Activated naive CD4-positive, alpha-beta T cell treated with anti-CD3 and anti-CD28 coated beads for 36 hours (primary cell): ENCODE measurements at regions of chr12 and their contacts with region 1.

Region 1: GRCh38 chr12:65232476-65233077 is 45.9 kb upstream of the MSRB3 start:
- DNase-seq: no peak
- H3K4me3 Mint-ChIP-seq: no peak overlapping the region
- H3K27ac Mint-ChIP-seq: no peak overlapping the region
- H3K4me1 Mint-ChIP-seq: peaks cover 11% of the 10 kb centered on the region
- H3K27me3 Mint-ChIP-seq: no peaks in the 10 kb centered on the region

Region 2: DNA sequence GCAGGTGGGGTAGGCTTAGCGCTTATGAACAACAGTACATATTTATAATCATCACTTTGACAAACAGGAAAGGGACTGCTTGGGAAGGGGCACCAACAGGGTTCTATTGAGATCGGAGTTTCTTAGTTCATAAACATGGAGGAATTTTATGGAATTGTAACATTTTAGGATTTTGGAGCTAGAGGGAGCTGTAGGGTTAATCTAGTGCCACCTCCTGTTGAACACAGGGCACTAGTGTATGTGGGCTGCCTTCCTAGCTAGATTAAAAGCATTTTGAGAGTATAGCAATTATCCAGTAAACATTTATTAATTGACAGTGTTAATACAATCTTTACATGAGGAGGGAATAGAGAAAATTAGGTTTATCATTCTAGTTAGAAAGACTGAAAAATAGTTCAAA is 431.2 kb before region 1 on chr12:
- CTCF ChIA-PET with region 1: interaction called, 10 read pairs
- intact Hi-C with region 1: loop called (anchors 2 kb)
- DNase-seq: no peak
- H3K4me3 Mint-ChIP-seq: no peak overlapping the region
- H3K27ac Mint-ChIP-seq: no peak overlapping the region
- H3K4me1 Mint-ChIP-seq: peaks cover 3% of the 10 kb centered on the region
- H3K27me3 Mint-ChIP-seq: peaks cover 23% of the 10 kb centered on the region

Region 3: GRCh38 chr12:65055859-65056258 is 176.7 kb before region 1 on chr12:
- CTCF ChIA-PET with region 1: no interaction called
- intact Hi-C with region 1: no loop called
- DNase-seq: no peak
- H3K4me3 Mint-ChIP-seq: no peak overlapping the region
- H3K27ac Mint-ChIP-seq: no peak overlapping the region
- H3K4me1 Mint-ChIP-seq: no peaks in the 10 kb centered on the region
- H3K27me3 Mint-ChIP-seq: peaks cover 16% of the 10 kb centered on the region

Region 4: GRCh38 chr12:65121049-65121955 is 111.3 kb before region 1 on chr12 and contains the start of gene WIF1:
- CTCF ChIA-PET with region 1: interaction called, 4 read pairs
- intact Hi-C with region 1: loop called (anchors 1 kb)
- DNase-seq: peak; percentile 28
- H3K4me3 Mint-ChIP-seq: peak within 1 kb of the TSS; percentile 41
- H3K27ac Mint-ChIP-seq: no peak within 1 kb of the TSS
- H3K4me1 Mint-ChIP-seq: peaks cover 3% of the 10 kb centered on the region
- H3K27me3 Mint-ChIP-seq: peaks cover 24% of the 10 kb centered on the region
- total RNA-seq, gene WIF1: 0.20 TPM in 1 of 2 experiments, not detected in the other

Region 5: GRCh38 chr12:65156366-65156841 is 76.2 kb before region 1 on chr12:
- CTCF ChIA-PET with region 1: interaction called, 3 read pairs
- intact Hi-C with region 1: loop called (anchors 2 kb)
- DNase-seq: peak; percentile 35
- H3K4me3 Mint-ChIP-seq: peak overlapping the region; percentile 19
- H3K27ac Mint-ChIP-seq: peak overlapping the region; percentile 37
- H3K4me1 Mint-ChIP-seq: peaks cover 16% of the 10 kb centered on the region
- H3K27me3 Mint-ChIP-seq: peaks cover 12% of the 10 kb centered on the region

Region 6: GRCh38 chr12:65209655-65210043 is 22.9 kb before region 1 on chr12:
- CTCF ChIA-PET with region 1: interaction called, 5 read pairs
- intact Hi-C with region 1: loop called (anchors 2 kb)
- DNase-seq: no peak
- H3K4me3 Mint-ChIP-seq: peak overlapping the region; percentile 43
- H3K27ac Mint-ChIP-seq: peak overlapping the region; percentile 69
- H3K4me1 Mint-ChIP-seq: peaks cover 63% of the 10 kb centered on the region
- H3K27me3 Mint-ChIP-seq: no peaks in the 10 kb centered on the region